AG04449 (cell line): ENCODE measurements at regions of chr1 and their contacts with region 1.

Region 1: DNA sequence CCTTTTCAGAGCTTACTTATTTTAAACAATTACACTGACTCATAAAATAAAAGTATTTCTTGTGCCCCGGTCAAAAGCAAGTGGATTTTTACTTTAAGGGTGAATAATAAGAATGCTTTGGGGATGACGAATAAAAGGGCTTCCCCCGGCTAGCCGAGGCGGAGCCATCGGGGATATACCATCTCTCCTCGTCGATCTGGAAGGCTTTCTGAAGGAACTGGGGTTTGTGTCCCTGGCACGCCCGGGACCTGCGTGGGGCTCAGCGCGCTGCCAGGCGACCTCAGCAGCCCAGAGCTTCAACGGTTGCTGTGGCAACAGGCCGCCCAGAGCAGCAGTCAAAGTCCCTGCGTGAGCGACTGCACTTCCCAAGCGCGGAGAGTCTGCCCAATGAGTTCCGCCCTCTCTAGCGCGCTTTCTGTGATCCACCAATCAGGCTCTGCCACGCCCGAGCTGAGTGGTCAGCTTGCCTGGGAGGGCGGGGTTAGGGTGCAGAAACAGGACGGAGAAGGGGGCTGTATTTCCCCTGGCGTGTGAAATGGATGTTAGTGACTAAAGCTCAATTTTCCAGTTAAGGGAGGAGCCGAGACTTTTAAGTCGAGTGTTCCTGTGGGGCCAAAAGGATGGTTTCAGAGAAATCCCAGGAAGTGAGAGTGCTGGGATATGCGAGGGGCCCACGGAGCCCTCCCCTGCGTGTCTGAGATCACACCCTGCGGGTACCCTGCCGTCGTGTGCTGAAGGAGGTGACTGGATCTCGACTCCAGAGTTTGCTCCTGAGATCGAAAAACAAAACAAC is 33.0 kb upstream of the MGST3 start:
- DNase-seq: peak; percentile 74
- H3K4me3 ChIP-seq: peak overlapping the region; percentile 76
- CTCF ChIP-seq: no peak

Region 2: DNA sequence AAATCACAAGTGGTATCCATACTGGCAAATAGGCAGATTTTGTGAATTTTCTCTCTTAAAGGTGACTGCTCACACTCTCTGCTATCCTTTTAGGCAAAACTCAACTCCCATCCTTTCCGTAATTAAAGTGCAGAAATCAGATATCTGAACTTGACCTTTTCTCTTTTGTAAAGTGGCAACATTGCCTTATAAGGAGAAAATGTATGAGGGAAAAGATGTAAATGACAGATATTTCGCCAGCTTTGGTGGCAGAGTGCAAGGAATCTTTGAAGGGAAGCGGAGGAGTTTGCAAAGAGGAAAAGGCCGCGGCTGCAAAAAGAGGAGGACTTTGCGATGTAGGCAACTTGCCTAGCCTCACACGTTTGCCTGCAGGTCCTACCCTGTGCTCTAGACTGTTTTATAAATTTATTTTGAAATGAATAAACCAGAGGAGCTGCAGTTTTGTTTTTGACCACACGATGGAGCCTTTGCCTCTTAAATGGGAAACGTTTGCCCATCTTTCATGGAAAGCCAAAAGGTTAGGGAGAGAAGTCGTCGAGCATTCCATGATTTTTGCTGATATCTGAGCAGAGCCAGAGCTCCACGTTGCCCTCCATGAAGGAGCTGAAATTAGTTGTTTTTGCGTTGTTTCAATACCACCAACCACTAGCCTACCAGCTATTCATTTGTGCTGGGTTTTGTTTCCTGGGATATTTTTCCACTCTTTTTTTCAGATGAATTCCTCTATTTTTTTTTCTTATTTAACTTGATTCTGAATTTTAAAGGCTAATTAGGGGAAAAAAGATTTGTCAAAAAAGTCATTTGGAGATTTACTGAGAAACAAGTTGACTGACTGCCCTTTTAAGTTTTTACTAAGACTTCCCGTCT is 483.8 kb before region 1 on chr1:
- CTCF ChIA-PET with region 1: interaction called, 12 read pairs
- POLR2A ChIA-PET with region 1: no interaction called
- DNase-seq: no peak
- H3K4me3 ChIP-seq: no peak overlapping the region
- CTCF ChIP-seq: peak; percentile 58

Region 3: DNA sequence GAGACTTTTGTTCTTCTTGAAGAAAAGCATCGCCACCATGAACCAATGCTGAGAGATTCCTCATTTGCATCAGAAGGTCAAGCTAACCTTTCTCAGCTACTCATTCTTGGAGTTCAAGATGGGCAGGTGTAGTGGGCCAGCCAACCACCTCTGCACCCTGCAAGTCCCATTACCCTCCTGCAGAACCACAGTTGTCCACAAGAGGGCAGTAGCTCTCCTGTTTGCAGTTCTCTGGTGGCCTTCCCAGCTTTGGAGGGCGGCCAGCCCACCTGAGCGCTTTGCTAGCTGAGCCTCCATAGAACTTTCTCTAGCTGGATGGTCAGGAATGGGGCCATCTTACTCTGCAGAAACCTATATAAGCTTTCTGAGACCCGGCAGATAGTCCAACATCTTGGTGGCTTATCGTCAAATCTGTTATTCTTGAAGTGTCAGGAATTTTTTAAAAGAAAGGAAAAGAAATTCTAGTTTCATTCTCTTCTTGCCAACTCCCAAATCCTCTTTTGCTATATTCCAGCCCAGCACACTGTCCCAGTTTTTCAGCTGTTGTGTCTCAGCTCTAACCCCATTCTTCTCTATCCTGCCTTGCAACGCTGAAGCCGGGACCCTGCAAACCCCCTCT is 230.6 kb before region 1 on chr1:
- CTCF ChIA-PET with region 1: interaction called, 69 read pairs
- POLR2A ChIA-PET with region 1: no interaction called
- DNase-seq: no peak
- H3K4me3 ChIP-seq: no peak overlapping the region
- CTCF ChIP-seq: peak; percentile 94

Region 4: GRCh38 chr1:165586435-165586834 is 11.6 kb before region 1 on chr1:
- CTCF ChIA-PET with region 1: interaction called, 34 read pairs
- POLR2A ChIA-PET with region 1: no interaction called
- DNase-seq: no peak
- H3K4me3 ChIP-seq: no peak overlapping the region
- CTCF ChIP-seq: no peak

Region 5: DNA sequence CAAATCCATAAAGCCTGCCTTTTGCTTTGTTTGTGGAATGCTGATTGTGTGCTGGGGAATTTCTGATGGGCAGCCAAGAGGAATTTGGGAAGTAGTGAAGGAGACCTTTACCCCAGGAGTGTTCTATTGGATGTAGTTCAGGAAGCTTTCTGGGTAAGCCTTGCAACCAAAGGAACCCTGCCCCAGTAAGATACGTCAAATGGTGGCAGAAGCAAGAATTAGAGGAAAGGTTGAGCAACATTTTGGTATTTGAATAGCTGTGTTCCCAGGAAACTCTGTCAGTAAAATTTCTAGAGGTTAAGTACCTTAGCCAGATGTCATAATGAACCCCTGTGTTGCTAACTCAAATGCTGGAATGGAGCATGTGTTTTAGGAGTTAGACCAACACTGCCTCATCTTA is 39.3 kb after region 1 on chr1:
- CTCF ChIA-PET with region 1: interaction called, 21 read pairs
- POLR2A ChIA-PET with region 1: no interaction called
- DNase-seq: no peak
- H3K4me3 ChIP-seq: no peak overlapping the region
- CTCF ChIP-seq: no peak

Region 6: DNA sequence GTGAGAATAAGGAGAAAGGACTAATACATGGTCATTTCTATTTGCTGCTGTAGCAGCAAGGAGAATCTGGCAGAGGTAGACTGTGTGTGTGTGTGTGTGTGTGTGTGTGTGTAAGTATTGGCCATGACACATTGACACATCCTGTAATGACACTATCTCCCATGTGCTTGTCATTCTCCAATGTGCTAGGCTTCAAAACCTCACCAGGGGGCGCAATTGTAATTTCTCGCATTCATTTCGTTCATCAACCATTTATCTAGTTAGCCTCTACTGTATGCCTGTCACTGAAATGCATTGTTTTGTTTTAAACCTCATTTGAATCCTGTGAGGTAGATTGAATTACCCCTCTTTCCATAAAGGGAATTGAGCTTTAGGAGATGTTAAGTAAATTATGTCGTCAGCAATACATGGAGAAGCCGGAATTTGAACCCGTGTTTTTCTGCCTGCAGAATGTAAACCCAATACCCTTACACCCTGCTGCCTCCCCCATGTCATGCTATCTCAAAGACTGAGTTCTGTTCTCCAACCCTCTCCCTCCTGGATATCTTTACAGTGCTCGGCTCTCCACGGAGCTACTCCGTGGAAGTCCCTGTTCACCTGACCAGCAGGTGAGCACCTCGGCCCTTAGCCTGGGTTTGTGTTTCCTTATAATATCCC is 330.1 kb after region 1 on chr1:
- CTCF ChIA-PET with region 1: interaction called, 16 read pairs
- POLR2A ChIA-PET with region 1: no interaction called
- DNase-seq: no peak
- H3K4me3 ChIP-seq: no peak overlapping the region
- CTCF ChIP-seq: peak; percentile 72